CD14-positive monocyte (primary cell): ENCODE measurements at regions of chr2 and their contacts with region 1.

Region 1: GRCh38 chr2:10267551-10268465 is 34.9 kb upstream of the HPCAL1 start:
- DNase-seq: no peak
- H3K4me3 ChIP-seq: no peak overlapping the region
- H3K4me3 Mint-ChIP-seq: no peak overlapping the region
- H3K27ac ChIP-seq: no peak overlapping the region
- H3K27ac Mint-ChIP-seq: no peak overlapping the region
- H3K4me1 ChIP-seq: peaks cover 10 to 14% of the 10 kb centered on the region in 2 donors
- H3K4me1 Mint-ChIP-seq: peaks cover 10% of the 10 kb centered on the region
- H3K27me3 ChIP-seq: no peaks in the 10 kb centered on the region
- H3K27me3 Mint-ChIP-seq: peaks cover 0 to 11% (median 9%) of the 10 kb centered on the region in 3 donors
- CTCF ChIP-seq: no peak

Region 2: DNA sequence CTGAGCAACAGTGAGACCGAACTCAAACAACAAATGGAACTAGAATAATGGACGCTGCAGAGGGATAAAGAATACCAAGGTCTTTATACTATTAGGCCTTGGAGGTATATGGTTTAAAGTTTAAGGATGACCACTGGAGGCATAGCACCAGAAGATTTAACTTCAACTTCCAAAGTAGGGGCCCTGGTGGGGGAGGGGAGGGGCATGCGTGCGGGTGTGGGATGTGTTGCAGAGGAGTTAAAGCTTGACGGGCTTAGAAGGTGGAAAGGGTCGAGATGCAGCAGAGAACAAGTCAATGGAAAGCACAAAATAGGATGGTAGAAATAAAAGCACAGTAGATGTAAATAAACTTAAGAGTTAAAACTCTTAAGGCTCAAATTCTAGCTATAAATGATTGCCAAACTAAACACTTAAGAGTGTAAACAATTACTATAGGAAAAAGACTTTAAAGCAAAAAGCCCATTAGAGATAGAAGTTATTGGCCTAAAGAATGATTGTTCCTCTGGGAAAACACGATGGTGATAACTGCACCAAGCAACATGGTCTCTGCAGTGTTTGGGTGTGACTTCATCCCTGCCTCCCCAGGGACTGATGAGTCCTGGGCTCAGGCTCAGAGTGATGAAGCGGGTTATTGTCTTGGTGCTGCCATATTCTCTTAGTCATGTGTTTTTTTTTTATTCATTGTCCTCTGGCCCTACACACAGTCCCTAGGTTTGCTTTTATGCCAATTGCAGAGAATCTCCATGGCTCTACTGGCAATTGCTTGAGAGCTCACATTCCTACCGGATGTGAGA is 132.3 kb before region 1 on chr2:
- intact Hi-C with region 1: loop called in 1 of 2 experiments (anchors 10 kb)
- DNase-seq: no peak
- H3K4me3 ChIP-seq: no peak overlapping the region
- H3K4me3 Mint-ChIP-seq: no peak overlapping the region
- H3K27ac ChIP-seq: peak overlapping the region in 1 of 2 donors; percentile 6
- H3K27ac Mint-ChIP-seq: peak overlapping the region in 4 of 7 donors; percentile 26 to 81 (median 52)
- H3K4me1 ChIP-seq: peaks cover 5 to 7% of the 10 kb centered on the region in 2 donors
- H3K4me1 Mint-ChIP-seq: peaks cover 18% of the 10 kb centered on the region
- H3K27me3 ChIP-seq: no peaks in the 10 kb centered on the region
- H3K27me3 Mint-ChIP-seq: peaks cover 0 to 4% (median 0%) of the 10 kb centered on the region in 3 donors
- CTCF ChIP-seq: no peak

Region 3: GRCh38 chr2:10170256-10170655 is 97.6 kb before region 1 on chr2:
- intact Hi-C with region 1: no loop called
- DNase-seq: no peak
- H3K4me3 ChIP-seq: no peak overlapping the region
- H3K4me3 Mint-ChIP-seq: no peak overlapping the region
- H3K27ac ChIP-seq: no peak overlapping the region
- H3K27ac Mint-ChIP-seq: peak overlapping the region in 2 of 7 donors; percentile 55 to 60
- H3K4me1 ChIP-seq: no peaks in the 10 kb centered on the region
- H3K4me1 Mint-ChIP-seq: no peaks in the 10 kb centered on the region
- H3K27me3 ChIP-seq: no peaks in the 10 kb centered on the region
- H3K27me3 Mint-ChIP-seq: no peaks in the 10 kb centered on the region
- CTCF ChIP-seq: no peak

Region 4: DNA sequence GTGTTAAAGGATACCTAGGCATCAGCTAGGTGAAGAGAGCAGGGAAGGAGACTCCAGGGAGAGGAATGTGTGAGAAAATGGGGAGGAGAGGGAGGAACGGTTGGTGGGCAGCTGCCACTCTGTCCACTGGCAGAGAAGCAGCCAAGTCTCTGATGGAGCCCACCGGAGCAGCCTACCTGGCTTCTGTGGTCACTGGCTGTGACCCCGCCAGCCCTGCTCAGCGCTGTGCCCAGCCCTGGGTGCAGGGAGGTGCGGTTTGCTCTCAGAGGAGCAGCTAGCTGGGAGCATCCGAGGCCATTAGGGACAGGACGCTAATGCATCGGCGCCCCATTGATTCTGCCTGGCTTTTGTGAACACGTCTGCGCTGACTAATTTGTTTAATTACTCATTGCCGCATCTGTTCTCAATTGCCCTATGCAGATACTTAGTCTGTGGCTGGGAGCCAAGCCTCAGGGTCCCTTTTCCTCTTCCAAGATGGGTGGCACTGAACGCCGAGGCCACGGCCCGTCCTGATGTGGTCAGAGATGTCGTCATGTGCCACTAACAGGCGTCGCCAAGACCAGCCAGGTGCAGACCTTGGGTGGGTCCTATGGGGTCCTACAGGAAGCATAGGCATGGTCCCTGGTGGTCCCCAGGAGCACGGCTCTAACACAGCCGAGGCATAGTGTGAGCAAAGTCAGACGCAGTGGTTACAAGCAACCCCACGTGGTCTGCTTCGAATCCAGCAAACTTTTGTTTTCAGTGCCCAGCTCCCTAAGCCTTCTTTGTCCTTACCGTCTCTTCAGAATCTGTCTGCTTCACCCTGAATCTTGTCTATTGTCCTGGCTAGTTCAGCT is 63.3 kb before region 1 on chr2:
- intact Hi-C with region 1: no loop called
- DNase-seq: no peak
- H3K4me3 ChIP-seq: no peak overlapping the region
- H3K4me3 Mint-ChIP-seq: no peak overlapping the region
- H3K27ac ChIP-seq: no peak overlapping the region
- H3K27ac Mint-ChIP-seq: peak overlapping the region in 2 of 7 donors; percentile 11 to 42
- H3K4me1 ChIP-seq: no peaks in the 10 kb centered on the region
- H3K4me1 Mint-ChIP-seq: no peaks in the 10 kb centered on the region
- H3K27me3 ChIP-seq: no peaks in the 10 kb centered on the region
- H3K27me3 Mint-ChIP-seq: peaks cover 0 to 2% (median 0%) of the 10 kb centered on the region in 3 donors
- CTCF ChIP-seq: no peak

Region 5: DNA sequence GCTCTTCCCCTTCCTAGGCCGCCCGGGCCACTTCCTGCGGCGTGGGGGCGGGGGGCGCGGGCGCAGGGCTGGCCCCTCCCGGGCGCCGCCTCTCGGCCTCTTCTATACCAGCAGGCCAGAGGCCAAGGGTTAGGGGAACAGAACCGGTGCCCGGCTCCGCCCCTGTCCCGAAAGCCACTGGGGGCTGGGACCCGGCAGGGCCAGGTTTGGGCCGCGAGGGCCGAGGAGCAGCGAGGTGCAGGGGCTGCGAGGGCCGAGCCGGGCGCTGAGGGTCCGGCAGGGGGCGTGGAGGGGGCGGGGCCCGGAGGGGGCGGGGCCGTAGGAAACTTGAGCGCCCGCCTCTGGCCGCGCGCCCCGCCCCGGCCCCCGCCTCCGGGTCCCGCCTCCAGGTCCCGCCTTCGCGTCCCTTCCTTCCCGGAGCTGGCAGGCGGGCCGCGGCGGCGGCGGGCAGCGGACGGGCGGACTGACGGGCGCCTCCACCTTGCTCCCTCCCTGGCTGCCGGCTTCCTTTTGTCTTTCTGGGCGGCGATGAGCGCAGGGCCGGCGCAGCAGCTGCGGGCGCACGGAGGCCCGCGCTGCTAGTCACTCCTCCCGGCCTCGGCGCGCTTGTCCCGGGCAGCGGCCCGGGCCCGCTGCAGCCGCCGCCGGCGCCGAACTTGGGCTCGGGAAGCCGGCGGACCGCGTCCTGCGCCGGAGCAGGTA is 34.8 kb after region 1 on chr2 and contains the start of gene HPCAL1:
- intact Hi-C with region 1: loop called (anchors 5 kb)
- DNase-seq: peak; percentile 90 to 91 (median 90)
- H3K4me3 ChIP-seq: peak within 1 kb of the TSS; percentile 79 to 93 (median 84)
- H3K4me3 Mint-ChIP-seq: peak within 1 kb of the TSS; percentile 98 to 100
- H3K27ac ChIP-seq: peak within 1 kb of the TSS; percentile 87 to 94
- H3K27ac Mint-ChIP-seq: peak within 1 kb of the TSS; percentile 83 to 95 (median 92)
- H3K4me1 ChIP-seq: peaks cover 64 to 92% of the 10 kb centered on the region in 2 donors
- H3K4me1 Mint-ChIP-seq: peaks cover 76% of the 10 kb centered on the region
- H3K27me3 ChIP-seq: no peaks in the 10 kb centered on the region
- H3K27me3 Mint-ChIP-seq: peaks cover 0 to 5% (median 4%) of the 10 kb centered on the region in 3 donors
- CTCF ChIP-seq: peak; percentile 76
- polyA plus RNA-seq, gene HPCAL1: 82.1 to 99.5 (median 98.0) TPM

Region 6: DNA sequence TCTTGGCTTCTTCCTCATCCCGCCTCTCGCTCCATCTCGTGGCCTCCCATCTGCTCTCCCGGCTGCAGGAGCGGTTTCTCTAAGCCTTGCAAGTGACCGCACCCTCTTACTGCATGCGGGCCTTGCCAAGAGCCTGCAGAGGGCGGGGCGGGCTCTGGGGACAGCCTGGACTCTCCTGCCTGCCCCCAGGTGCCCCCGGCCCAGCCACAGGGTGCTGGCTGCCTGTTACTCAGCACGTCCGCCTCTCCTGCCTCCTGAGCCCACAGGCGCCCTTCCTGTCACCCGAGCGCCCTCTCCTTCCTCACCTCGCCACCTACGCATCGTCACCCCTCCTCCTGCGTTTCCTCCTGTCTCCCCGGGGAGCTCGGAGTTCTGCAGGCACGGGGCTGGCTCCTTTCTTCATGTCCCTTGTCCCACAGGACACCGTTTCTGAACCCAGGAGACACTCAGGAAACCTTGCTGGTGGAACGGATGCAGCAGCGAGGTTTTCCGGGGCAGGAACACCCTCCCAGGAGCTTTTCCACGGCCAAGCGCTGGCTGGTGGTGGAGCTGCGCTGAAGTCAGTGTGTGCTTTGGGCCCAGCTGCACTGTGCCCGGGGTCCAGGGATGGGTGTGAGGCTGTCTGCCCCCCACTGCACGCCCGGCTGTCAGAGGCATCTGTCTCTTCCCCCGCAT is 63.4 kb after region 1 on chr2:
- intact Hi-C with region 1: no loop called
- DNase-seq: peak; percentile 50 to 61 (median 55)
- H3K4me3 ChIP-seq: peak overlapping the region in 2 of 3 experiments; percentile 28 to 63
- H3K4me3 Mint-ChIP-seq: peak overlapping the region; percentile 66 to 86
- H3K27ac ChIP-seq: peak overlapping the region; percentile 91 to 93
- H3K27ac Mint-ChIP-seq: peak overlapping the region; percentile 97 to 99 (median 98)
- H3K4me1 ChIP-seq: peaks cover 46 to 66% of the 10 kb centered on the region in 2 donors
- H3K4me1 Mint-ChIP-seq: peaks cover 70% of the 10 kb centered on the region
- H3K27me3 ChIP-seq: no peaks in the 10 kb centered on the region
- H3K27me3 Mint-ChIP-seq: peaks cover 0 to 4% (median 1%) of the 10 kb centered on the region in 3 donors
- CTCF ChIP-seq: peak; percentile 22

Region 7: GRCh38 chr2:10434886-10435819 is 167.3 kb after region 1 on chr2:
- intact Hi-C with region 1: loop called (anchors 5 kb)
- DNase-seq: peak; percentile 68 to 73 (median 69)
- H3K4me3 ChIP-seq: no peak overlapping the region
- H3K4me3 Mint-ChIP-seq: no peak overlapping the region
- H3K27ac ChIP-seq: no peak overlapping the region
- H3K27ac Mint-ChIP-seq: no peak overlapping the region
- H3K4me1 ChIP-seq: peaks cover 12 to 17% of the 10 kb centered on the region in 2 donors
- H3K4me1 Mint-ChIP-seq: peaks cover 15% of the 10 kb centered on the region
- H3K27me3 ChIP-seq: peaks cover 0 to 6% of the 10 kb centered on the region in 2 donors
- H3K27me3 Mint-ChIP-seq: peaks cover 7 to 16% (median 8%) of the 10 kb centered on the region in 3 donors
- CTCF ChIP-seq: peak; percentile 96